CD4-positive, alpha-beta T cell (primary cell): ENCODE measurements at regions of chrX and their contacts with region 1.

Region 1: GRCh38 chrX:124217304-124218251 is 114.9 kb upstream of the TEX13D start:
- DNase-seq: peak; percentile 33 to 85 (median 60)
- ATAC-seq: peak; percentile 94
- H3K4me3 ChIP-seq: peak overlapping the region; percentile 31
- H3K4me3 Mint-ChIP-seq: peak overlapping the region; percentile 49
- H3K27ac ChIP-seq: peak overlapping the region; percentile 76 to 83
- H3K27ac Mint-ChIP-seq: peak overlapping the region; percentile 84
- H3K4me1 ChIP-seq: peaks cover 58% of the 10 kb centered on the region
- H3K4me1 Mint-ChIP-seq: peaks cover 88% of the 10 kb centered on the region
- H3K27me3 ChIP-seq: no peaks in the 10 kb centered on the region
- H3K27me3 Mint-ChIP-seq: no peaks in the 10 kb centered on the region
- CTCF ChIP-seq: no peak

Region 2: DNA sequence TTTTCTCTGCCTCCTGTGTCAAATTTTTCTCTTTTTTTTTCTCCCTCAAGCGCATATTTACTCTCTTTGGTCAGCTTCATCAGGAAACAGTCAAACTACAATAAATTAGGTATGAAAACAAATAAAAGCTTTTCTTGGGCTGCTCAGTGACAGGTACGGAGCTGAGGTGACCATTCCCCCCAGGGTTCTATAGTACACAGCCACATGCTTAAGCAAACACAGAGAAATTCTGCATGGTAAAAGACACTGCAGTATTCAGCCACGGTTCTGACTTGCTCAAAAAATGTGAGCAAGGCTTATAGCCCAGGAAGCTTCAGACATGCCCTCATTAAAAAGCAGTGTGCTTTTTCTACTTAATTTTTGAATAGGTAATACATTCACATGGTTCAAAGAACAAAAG is 895.0 kb before region 1 on chrX:
- CTCF ChIA-PET with region 1: no interaction called
- POLR2A ChIA-PET with region 1: no interaction called
- intact Hi-C with region 1: no loop called
- DNase-seq: no peak
- ATAC-seq: no peak
- H3K4me3 ChIP-seq: no peak overlapping the region
- H3K4me3 Mint-ChIP-seq: no peak overlapping the region
- H3K27ac ChIP-seq: no peak overlapping the region
- H3K27ac Mint-ChIP-seq: no peak overlapping the region
- H3K4me1 ChIP-seq: no peaks in the 10 kb centered on the region
- H3K4me1 Mint-ChIP-seq: no peaks in the 10 kb centered on the region
- H3K27me3 ChIP-seq: no peaks in the 10 kb centered on the region
- H3K27me3 Mint-ChIP-seq: no peaks in the 10 kb centered on the region
- CTCF ChIP-seq: no peak

Region 3: DNA sequence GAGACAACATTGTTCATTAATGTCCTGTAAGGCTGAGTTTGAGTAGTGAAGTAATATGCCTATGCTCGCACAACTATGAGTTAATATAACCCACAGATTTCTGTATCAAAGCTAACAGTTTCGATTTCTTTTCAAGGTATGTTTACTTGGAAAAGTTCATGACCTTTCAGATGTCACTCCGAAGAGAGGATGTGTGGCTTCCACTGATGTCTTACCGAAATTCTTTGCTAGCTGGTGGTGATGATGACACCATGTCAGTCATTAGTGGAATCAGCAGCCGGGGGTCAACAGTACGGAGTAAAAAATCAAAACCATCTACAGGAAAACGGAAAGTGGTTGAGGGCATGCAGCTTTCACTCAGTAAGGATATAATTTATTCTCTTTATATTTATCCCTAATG is 131.2 kb before region 1 on chrX:
- CTCF ChIA-PET with region 1: no interaction called
- POLR2A ChIA-PET with region 1: no interaction called
- intact Hi-C with region 1: no loop called
- DNase-seq: peak in 11 of 14 experiments; percentile 4 to 84 (median 27)
- ATAC-seq: peak; percentile 95
- H3K4me3 ChIP-seq: no peak overlapping the region
- H3K4me3 Mint-ChIP-seq: peak overlapping the region; percentile 77
- H3K27ac ChIP-seq: no peak overlapping the region
- H3K27ac Mint-ChIP-seq: peak overlapping the region; percentile 92
- H3K4me1 ChIP-seq: peaks cover 3% of the 10 kb centered on the region
- H3K4me1 Mint-ChIP-seq: peaks cover 36% of the 10 kb centered on the region
- H3K27me3 ChIP-seq: no peaks in the 10 kb centered on the region
- H3K27me3 Mint-ChIP-seq: no peaks in the 10 kb centered on the region
- CTCF ChIP-seq: no peak

Region 4: DNA sequence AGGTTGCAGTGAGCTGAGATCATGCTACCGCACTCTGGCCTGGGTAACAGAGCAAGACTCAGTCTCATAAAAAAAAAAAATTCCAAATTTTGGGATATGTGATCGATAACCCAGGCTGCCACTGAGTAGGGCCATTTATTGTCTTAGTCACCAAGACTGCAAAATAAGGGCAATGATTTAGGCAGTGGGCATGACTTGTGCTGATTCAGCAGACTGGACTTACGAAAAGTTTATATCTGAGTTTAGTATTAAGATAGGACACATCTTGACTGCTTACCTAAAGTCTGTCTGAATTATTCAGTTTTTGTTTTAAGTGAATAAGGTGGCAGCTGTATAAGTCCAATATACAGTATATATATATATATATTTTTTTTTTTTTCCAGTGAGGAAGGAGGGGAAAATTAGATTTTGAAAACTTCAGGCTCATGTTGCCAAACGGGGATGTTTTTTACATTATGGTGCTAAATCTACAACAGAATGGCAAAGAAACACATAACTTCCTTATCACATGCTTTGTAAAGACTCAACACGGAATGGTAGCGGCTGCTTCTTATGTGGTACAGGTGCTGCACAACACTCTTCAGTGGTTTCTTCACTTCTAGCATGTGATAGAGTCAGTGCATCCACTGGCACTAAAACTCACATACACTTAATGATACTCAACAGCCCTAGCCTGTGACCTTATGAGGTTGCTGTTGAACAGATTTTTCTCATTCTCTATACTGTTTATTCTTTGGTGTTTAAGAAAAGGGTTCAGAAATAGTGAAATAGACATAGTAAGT is 121.3 kb after region 1 on chrX:
- CTCF ChIA-PET with region 1: no interaction called
- POLR2A ChIA-PET with region 1: interaction called, 13 read pairs
- intact Hi-C with region 1: no loop called
- DNase-seq: peak in 8 of 14 experiments; percentile 4 to 80 (median 38)
- ATAC-seq: peak; percentile 75
- H3K4me3 ChIP-seq: no peak overlapping the region
- H3K4me3 Mint-ChIP-seq: peak overlapping the region; percentile 25
- H3K27ac ChIP-seq: no peak overlapping the region
- H3K27ac Mint-ChIP-seq: peak overlapping the region; percentile 87
- H3K4me1 ChIP-seq: peaks cover 22% of the 10 kb centered on the region
- H3K4me1 Mint-ChIP-seq: peaks cover 51% of the 10 kb centered on the region
- H3K27me3 ChIP-seq: no peaks in the 10 kb centered on the region
- H3K27me3 Mint-ChIP-seq: no peaks in the 10 kb centered on the region
- CTCF ChIP-seq: no peak

Region 5: DNA sequence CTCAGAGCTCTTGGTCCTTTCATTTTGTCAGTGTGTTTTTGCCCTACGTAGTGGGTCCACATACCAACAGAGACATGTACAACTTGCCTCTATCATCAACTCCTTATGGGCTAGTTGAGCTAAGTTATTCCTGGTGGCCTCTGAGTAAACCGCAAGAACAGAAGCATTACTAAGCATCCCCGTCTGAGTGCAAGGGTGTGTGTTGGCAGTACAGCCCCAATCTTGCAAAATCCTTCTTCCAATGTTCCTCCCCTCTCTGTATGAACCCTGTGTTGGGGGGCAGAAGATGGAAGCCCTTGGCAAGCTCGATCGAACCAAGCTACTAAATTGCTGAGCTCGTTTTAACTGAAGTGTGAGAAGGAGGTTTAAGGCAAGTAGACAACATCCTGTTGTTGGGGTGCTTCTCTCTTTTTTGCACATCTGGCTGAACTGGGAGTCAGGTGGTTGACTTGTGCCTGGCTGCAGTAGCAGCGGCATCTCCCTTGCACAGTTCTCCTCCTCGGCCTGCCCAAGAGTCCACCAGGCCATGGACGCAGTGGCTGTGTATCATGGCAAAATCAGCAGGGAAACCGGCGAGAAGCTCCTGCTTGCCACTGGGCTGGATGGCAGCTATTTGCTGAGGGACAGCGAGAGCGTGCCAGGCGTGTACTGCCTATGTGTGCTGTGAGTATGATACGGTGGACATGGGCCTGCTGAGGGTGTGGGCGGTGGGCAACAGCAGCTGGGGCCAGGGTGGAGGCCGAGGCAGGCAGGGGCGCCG is 128.7 kb after region 1 on chrX and contains the start of gene SH2D1A:
- CTCF ChIA-PET with region 1: interaction called, 3 read pairs
- POLR2A ChIA-PET with region 1: interaction called, 48 read pairs
- intact Hi-C with region 1: loop called (anchors 2 to 5 kb)
- DNase-seq: peak in 10 of 14 experiments; percentile 3 to 79 (median 33)
- ATAC-seq: peak; percentile 47
- H3K4me3 ChIP-seq: peak within 1 kb of the TSS; percentile 78
- H3K4me3 Mint-ChIP-seq: peak within 1 kb of the TSS; percentile 99
- H3K27ac ChIP-seq: peak within 1 kb of the TSS; percentile 69 to 75
- H3K27ac Mint-ChIP-seq: peak within 1 kb of the TSS; percentile 98
- H3K4me1 ChIP-seq: peaks cover 27% of the 10 kb centered on the region
- H3K4me1 Mint-ChIP-seq: peaks cover 52% of the 10 kb centered on the region
- H3K27me3 ChIP-seq: no peaks in the 10 kb centered on the region
- H3K27me3 Mint-ChIP-seq: no peaks in the 10 kb centered on the region
- CTCF ChIP-seq: no peak
- total RNA-seq, gene SH2D1A: 39.6 to 41.5 TPM